Activated CD4-positive, alpha-beta memory T cell treated with anti-CD3 and anti-CD28 coated beads for 36 hours (primary cell): ENCODE measurements at regions of chrX and their contacts with region 1.

Region 1: GRCh38 chrX:136780763-136781162 is at the start of gene ARHGEF6:
- DNase-seq: peak; percentile 53
- H3K4me3 Mint-ChIP-seq: peak within 1 kb of the TSS; percentile 83
- H3K27ac Mint-ChIP-seq: peak within 1 kb of the TSS; percentile 96
- H3K4me1 Mint-ChIP-seq: peaks cover 58% of the 10 kb centered on the region
- H3K27me3 Mint-ChIP-seq: no peaks in the 10 kb centered on the region
- total RNA-seq, gene ARHGEF6: 52.7 to 54.1 TPM

Region 2: DNA sequence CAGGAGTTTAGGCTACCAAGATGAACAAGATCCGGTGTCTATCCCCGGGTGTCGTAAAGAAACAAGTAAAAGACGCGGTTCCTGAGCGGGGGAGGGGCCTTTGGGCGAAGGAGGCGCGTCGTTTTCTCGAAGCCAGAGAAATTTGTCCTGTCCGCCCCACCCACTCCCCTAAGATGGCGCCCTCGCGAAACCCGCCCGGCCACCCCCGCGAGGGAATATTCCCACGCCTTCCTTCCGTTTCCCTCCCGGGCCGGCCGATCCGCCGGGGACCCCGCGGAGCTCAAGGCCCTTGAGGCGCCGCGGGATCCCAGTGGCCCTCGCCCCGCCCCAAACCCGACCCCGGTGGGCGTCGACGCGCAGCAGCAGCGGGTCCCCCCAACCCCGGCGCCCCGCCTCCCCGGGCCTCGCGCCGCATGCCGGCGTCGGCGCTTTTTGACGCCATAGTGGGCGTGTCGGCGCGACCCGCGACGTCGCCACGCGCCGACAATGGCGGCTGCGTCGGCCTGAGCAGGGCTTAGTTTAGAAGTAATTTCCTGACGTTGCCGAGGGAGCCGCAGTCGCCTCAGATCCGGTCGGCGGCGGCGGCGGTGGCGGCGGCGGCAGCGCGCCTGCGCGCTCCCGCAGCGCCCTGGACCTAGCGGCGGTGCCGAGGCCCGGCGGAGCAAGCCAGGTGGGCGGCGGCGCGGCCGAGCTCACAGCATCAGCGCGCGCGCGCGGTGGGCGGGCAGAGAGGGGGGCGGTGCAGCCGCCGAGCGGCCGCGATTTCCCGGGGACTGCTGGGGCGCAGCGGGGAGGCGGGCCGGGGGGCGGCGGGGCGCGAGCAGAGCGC is 283.8 kb before region 1 on chrX and contains the start of gene HTATSF1:
- CTCF ChIA-PET with region 1: no interaction called
- POLR2A ChIA-PET with region 1: no interaction called
- intact Hi-C with region 1: loop called (anchors 2 kb)
- DNase-seq: peak; percentile 92
- H3K4me3 Mint-ChIP-seq: peak within 1 kb of the TSS; percentile 93
- H3K27ac Mint-ChIP-seq: peak within 1 kb of the TSS; percentile 96
- H3K4me1 Mint-ChIP-seq: peaks cover 17% of the 10 kb centered on the region
- H3K27me3 Mint-ChIP-seq: peaks cover 2% of the 10 kb centered on the region
- total RNA-seq, gene HTATSF1: 49.4 to 53.4 TPM

Region 3: DNA sequence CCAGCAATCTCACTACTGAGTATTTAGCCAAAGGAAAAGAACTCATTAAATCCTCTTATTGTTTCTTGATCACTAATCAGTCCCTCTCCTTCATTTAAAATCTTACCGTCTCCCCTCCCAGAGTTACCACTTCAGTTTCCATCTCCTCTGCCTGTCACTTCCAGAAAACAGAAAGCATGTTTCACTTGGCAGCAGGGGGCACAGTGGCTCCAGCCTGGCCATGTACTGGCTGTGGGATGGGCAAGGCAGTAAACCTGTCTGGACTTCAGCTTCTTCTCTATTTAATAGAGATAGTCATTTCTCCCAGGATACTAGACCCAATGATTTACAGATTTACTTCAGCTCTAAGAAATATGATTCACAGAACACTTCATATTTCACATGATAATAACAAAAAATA is 69.6 kb before region 1 on chrX:
- CTCF ChIA-PET with region 1: interaction called, 3 read pairs
- POLR2A ChIA-PET with region 1: no interaction called
- intact Hi-C with region 1: loop called (anchors 1 kb)
- DNase-seq: peak; percentile 57
- H3K4me3 Mint-ChIP-seq: peak overlapping the region; percentile 1
- H3K27ac Mint-ChIP-seq: peak overlapping the region; percentile 93
- H3K4me1 Mint-ChIP-seq: peaks cover 61% of the 10 kb centered on the region
- H3K27me3 Mint-ChIP-seq: no peaks in the 10 kb centered on the region

Region 4: DNA sequence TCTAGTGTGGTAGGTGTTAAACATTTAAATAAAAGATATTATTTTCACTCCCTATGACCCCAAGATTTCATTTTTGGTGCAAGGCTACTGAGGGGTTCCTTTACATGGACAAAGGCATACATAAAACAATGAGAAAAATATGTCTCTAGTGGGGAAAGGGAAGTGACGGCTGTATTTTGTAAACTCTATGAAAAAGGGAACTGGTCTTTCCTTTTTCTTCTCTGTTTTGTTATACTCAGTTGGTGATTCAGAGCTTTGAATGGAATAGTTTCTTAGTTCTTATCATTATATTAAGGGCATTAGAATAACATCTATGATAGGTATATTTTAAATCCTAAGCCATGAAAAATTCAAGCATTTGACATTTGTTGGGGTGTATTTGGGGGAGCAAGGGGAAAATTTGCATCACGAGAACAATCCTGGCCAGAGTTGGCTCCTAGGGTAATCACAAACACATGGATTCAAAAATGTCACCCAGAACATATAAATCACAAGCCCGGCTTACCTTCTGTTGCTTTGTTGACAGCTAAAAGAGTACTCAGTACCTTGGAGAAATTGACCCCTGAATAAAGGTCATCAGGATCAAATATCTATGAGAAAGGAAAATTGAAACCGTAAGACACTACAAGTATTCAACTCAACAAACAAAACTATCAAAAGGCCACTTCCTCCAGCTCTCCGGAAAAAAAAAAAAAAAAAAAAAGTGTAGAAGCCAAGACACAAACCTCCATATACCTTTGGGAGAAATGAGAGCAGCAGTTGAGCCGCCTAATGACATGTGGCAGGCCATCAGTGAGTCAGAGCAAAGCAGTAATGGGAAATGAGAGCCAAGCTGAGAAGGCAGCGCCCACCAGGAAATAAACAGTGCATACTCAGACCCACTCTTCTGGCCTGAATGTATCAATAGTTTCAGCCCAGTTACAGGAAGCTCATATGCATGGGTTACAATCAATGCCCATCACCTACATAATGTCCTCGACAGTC is 33.5 kb before region 1 on chrX:
- CTCF ChIA-PET with region 1: no interaction called
- POLR2A ChIA-PET with region 1: interaction called, 3 read pairs
- intact Hi-C with region 1: loop called (anchors 1 kb)
- DNase-seq: peak; percentile 57
- H3K4me3 Mint-ChIP-seq: peak overlapping the region; percentile 48
- H3K27ac Mint-ChIP-seq: peak overlapping the region; percentile 93
- H3K4me1 Mint-ChIP-seq: peaks cover 88% of the 10 kb centered on the region
- H3K27me3 Mint-ChIP-seq: no peaks in the 10 kb centered on the region

Region 5: DNA sequence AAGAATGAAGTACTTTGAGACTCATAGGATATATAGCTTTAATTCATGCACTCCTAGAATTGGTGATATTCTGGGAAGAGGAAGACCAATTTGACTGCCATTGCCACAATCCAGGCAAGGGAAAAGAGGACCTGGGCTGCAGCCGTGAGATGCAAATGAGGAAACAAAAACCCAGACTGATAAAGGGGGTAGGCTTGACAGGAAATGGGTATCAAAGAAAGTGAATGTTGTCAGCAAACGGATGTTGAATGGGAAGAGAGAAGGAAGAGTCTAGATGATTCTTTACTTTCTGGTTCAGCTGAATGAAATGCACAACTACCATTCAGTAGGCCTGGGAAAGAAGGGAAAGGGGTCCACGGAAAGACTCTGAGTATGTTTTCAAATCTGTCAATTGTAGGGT is 17.0 kb after region 1 on chrX:
- CTCF ChIA-PET with region 1: no interaction called
- POLR2A ChIA-PET with region 1: no interaction called
- intact Hi-C with region 1: no loop called
- DNase-seq: no peak
- H3K4me3 Mint-ChIP-seq: no peak overlapping the region
- H3K27ac Mint-ChIP-seq: no peak overlapping the region
- H3K4me1 Mint-ChIP-seq: peaks cover 8% of the 10 kb centered on the region
- H3K27me3 Mint-ChIP-seq: no peaks in the 10 kb centered on the region

Region 6: GRCh38 chrX:136810493-136810892 is 29.7 kb after region 1 on chrX:
- CTCF ChIA-PET with region 1: no interaction called
- POLR2A ChIA-PET with region 1: no interaction called
- intact Hi-C with region 1: loop called (anchors 2 kb)
- DNase-seq: no peak
- H3K4me3 Mint-ChIP-seq: no peak overlapping the region
- H3K27ac Mint-ChIP-seq: peak overlapping the region; percentile 8
- H3K4me1 Mint-ChIP-seq: peaks cover 8% of the 10 kb centered on the region
- H3K27me3 Mint-ChIP-seq: no peaks in the 10 kb centered on the region

Region 7: GRCh38 chrX:136880452-136881013 is 99.8 kb after region 1 on chrX and contains the start of gene RBMX:
- CTCF ChIA-PET with region 1: no interaction called
- POLR2A ChIA-PET with region 1: interaction called, 20 read pairs
- intact Hi-C with region 1: loop called (anchors 1 kb)
- DNase-seq: peak; percentile 93
- H3K4me3 Mint-ChIP-seq: peak within 1 kb of the TSS; percentile 98
- H3K27ac Mint-ChIP-seq: peak within 1 kb of the TSS; percentile 99
- H3K4me1 Mint-ChIP-seq: peaks cover 13% of the 10 kb centered on the region
- H3K27me3 Mint-ChIP-seq: no peaks in the 10 kb centered on the region
- total RNA-seq, gene RBMX: 269 to 271 TPM

Region 8: GRCh38 chrX:136920001-136920400 is 139.2 kb after region 1 on chrX:
- CTCF ChIA-PET with region 1: no interaction called
- POLR2A ChIA-PET with region 1: no interaction called
- intact Hi-C with region 1: loop called (anchors 5 kb)
- DNase-seq: no peak
- H3K4me3 Mint-ChIP-seq: no peak overlapping the region
- H3K27ac Mint-ChIP-seq: no peak overlapping the region
- H3K4me1 Mint-ChIP-seq: peaks cover 2% of the 10 kb centered on the region
- H3K27me3 Mint-ChIP-seq: no peaks in the 10 kb centered on the region

Region 9: DNA sequence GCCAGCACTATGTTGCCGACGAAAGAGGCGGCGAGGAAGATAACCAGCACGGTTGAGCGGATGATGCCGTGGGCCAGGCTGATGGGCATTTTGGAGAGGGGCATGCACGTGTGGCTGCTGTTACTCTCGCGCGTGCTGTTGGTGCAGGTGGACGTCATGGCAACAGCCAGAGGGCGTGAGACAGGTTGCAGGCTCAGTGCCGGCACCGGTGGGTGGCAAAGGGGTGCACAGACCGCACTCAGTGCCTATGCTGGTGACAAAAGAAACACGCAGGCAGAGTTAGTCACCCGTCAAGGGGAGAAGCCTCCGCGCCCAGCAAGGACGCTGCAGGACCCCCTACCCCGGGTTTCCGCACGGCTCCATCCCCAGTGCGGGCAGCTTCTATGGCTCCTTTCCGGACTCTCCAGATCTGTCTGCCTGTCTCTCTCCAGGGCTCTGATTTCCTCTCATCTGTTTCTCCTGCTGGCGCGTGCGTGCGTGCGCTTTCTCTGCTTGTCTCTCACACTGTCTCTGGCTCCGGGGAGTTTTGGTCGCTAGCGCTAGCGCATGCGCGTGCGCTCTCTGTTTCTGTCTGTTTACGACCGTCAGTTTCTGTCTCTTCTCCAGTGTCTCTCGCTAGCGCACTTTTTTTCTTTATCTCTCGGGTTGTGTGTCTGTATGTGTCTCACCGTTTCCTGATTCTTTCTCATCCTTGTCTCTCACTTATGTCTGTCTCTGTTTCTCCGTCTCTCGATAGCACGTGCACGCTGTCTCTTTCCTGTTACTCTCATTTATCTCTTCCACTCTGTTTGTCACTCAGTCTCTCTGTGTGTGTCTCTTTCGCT is 251.0 kb after region 1 on chrX:
- CTCF ChIA-PET with region 1: no interaction called
- POLR2A ChIA-PET with region 1: no interaction called
- intact Hi-C with region 1: no loop called
- DNase-seq: peak; percentile 61
- H3K4me3 Mint-ChIP-seq: no peak overlapping the region
- H3K27ac Mint-ChIP-seq: no peak overlapping the region
- H3K4me1 Mint-ChIP-seq: peaks cover 7% of the 10 kb centered on the region
- H3K27me3 Mint-ChIP-seq: peaks cover 39% of the 10 kb centered on the region